ENCODE measurements at regions of chr2 and their contacts with region 1.

Region 1: DNA sequence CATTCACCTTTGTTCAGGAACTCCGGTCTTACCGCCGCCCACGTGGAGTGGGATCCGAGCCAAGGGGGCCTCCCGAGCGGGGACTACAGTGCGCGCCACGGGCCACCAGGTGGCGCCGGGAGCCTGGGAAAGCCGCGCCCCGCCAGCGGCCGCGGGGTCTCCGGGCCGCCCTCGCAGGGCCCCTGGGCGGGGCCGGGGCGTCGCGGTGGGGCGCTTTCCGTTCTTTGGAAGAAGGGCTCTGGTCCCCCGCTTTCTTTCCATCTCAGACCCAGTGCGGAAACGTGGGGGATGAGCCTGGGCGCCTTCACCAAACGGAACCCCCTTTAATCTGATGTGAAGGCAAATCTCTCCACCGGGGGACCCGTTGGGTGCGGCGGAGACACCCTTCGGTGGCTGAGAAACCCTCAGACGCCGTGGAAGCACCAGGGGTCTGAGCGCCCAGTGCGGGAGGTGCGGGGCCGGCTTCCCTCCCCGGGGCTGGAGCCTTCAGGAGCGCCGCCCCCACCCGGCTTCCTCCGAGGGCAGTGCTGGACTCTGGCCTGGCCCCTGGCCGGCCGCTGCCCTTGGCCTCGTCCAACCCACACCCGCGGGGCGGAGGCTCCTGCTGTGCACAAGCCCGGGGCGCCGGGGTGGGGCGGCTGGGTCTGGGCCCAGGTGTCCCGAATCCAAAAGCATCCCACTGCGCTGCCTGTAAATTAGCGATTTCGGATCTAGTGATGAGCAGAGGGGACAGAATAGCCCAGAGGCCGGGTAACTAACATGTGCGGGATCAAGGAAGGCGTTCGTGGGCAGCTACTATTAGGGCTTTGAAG is 44.6 kb downstream of the GORASP2 start:
- DNase-seq: peak; percentile 90
- ATAC-seq: peak; percentile 97 to 99

Region 2: DNA sequence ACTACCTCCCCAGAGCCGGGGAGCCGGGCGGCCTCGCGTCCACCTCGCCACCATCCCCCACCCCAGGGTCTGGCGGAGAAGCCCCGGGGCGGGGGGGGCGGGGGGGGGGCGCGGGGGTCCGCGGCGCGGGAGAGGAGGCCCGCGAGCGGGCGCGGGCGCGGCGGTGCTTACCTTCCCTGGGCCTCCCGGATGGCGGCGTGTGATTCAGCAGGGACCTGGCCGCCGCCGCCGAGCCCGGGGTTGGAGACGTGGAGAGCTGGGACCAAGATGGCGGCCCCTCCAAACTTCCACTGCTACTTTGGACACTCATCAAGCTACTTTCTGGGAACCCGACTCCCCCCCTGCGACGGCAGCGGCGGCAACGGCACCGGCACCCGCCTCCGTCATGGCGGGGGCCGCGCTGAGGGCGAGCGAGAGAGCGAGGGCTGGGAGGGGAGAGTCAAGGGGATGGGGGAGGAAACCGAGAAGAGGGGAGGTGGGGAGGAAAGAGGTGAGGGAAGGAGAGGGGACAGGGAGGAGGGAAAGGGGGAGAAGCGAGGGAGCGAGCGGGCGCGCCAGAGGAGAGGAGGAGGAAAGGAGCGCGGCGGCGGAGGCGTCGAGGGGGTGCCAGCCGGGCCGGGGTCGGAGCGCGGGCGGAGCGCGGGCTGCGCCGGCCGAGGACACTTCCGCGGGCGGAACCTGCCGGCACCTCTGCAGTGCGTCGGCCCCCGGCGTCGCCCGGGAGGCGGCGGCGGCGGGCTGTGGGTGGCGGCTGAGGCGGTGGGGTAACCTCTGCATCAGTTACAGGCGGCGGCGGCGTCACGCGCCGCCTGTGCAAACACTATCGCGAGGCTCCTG is 186.6 kb after region 1 on chr2 and contains the start of gene TLK1:
- intact Hi-C with region 1: loop called in 1 of 2 experiments (anchors 5 kb)
- DNase-seq: peak; percentile 77
- ATAC-seq: peak; percentile 77 to 86
- total RNA-seq, gene TLK1: 31.5 to 31.8 TPM

Region 3: GRCh38 chr2:171416009-171416926 is 442.6 kb after region 1 on chr2:
- intact Hi-C with region 1: loop called (anchors 1 to 2 kb)
- DNase-seq: peak; percentile 90
- ATAC-seq: peak; percentile 98 to 99

Region 4: GRCh38 chr2:171433763-171434670 is 460.3 kb after region 1 on chr2 and contains the starts of genes DCAF17 and METTL8:
- intact Hi-C with region 1: loop called in 1 of 2 experiments (anchors 5 kb)
- DNase-seq: peak; percentile 97
- ATAC-seq: peak; percentile 98 to 99
- total RNA-seq, gene DCAF17: 6.0 to 10.7 TPM
- total RNA-seq, gene METTL8: 10.2 to 13.3 TPM

Region 5: GRCh38 chr2:171811245-171811628 is 837.5 kb after region 1 on chr2:
- intact Hi-C with region 1: no loop called
- DNase-seq: no peak
- ATAC-seq: peak; percentile 34 to 42

Measured in left cardiac atrium (tissue), 4 donors.